B cell (primary cell): ENCODE measurements at regions of chr14 and their contacts with region 1.

Region 1: GRCh38 chr14:77076113-77076631 is 21.9 kb upstream of the CIPC start:
- DNase-seq: no peak
- ATAC-seq: no peak
- H3K4me3 ChIP-seq: no peak overlapping the region
- H3K4me3 Mint-ChIP-seq: no peak overlapping the region
- H3K27ac ChIP-seq: no peak overlapping the region
- H3K27ac Mint-ChIP-seq: no peak overlapping the region
- H3K4me1 ChIP-seq: peaks cover 0 to 10% of the 10 kb centered on the region in 2 donors
- H3K4me1 Mint-ChIP-seq: peaks cover 6% of the 10 kb centered on the region
- H3K27me3 ChIP-seq: peaks cover 0 to 2% (median 0%) of the 10 kb centered on the region in 4 experiments
- H3K27me3 Mint-ChIP-seq: no peaks in the 10 kb centered on the region
- CTCF ChIP-seq: no peak

Region 2: DNA sequence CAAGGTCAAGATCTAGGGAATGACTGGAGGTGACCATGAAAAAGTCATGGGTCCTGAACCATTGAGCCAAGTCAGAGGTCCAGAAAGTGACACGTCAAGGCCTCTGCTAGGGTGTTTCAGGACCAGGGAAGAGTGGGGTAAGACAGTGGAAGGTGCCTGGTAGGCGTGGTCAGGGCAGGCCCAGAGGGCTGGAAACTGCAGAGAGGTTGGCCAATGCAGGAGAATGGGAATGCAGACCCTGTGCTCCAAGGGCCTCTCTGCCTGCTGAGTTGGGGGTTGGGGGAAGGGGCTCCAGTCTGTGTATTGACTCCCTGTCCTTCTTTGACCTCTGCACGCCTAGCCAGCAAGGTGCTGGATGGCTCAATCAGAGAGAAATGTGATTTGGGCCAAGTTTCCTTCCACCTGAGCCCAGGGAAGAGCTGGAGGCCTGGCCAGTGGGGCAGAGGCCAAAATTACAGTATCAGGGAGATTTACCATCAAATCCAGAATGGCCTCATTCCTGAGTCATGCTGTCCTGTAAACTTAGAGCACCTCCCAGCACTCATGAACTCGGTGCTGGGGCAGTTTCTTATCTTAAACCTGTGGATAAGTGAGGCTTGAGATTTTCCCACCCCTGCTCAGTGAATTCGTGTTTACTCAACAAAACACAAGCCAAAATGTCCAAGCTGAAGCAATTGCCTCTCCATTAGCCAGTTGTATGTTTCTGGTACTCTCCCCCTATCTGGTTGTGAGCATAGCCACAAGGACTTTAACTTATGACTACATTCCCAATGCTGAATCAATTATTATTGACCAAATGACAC is 72.0 kb before region 1 on chr14:
- CTCF ChIA-PET with region 1: no interaction called
- POLR2A ChIA-PET with region 1: no interaction called
- intact Hi-C with region 1: no loop called
- DNase-seq: no peak
- ATAC-seq: no peak
- H3K4me3 ChIP-seq: no peak overlapping the region
- H3K4me3 Mint-ChIP-seq: no peak overlapping the region
- H3K27ac ChIP-seq: no peak overlapping the region
- H3K27ac Mint-ChIP-seq: no peak overlapping the region
- H3K4me1 ChIP-seq: peaks cover 14 to 24% of the 10 kb centered on the region in 2 donors
- H3K4me1 Mint-ChIP-seq: peaks cover 21% of the 10 kb centered on the region
- H3K27me3 ChIP-seq: peaks cover 0 to 5% (median 0%) of the 10 kb centered on the region in 4 experiments
- H3K27me3 Mint-ChIP-seq: no peaks in the 10 kb centered on the region
- CTCF ChIP-seq: no peak

Region 3: GRCh38 chr14:77086017-77086736 is 10.0 kb after region 1 on chr14:
- CTCF ChIA-PET with region 1: interaction called, 55 read pairs
- POLR2A ChIA-PET with region 1: interaction called, 12 read pairs
- intact Hi-C with region 1: no loop called
- DNase-seq: peak; percentile 56
- ATAC-seq: peak; percentile 78
- H3K4me3 ChIP-seq: no peak overlapping the region
- H3K4me3 Mint-ChIP-seq: no peak overlapping the region
- H3K27ac ChIP-seq: peak overlapping the region in 1 of 2 donors; percentile 33
- H3K27ac Mint-ChIP-seq: peak overlapping the region; percentile 32
- H3K4me1 ChIP-seq: peaks cover 0 to 7% of the 10 kb centered on the region in 2 donors
- H3K4me1 Mint-ChIP-seq: peaks cover 26% of the 10 kb centered on the region
- H3K27me3 ChIP-seq: no peaks in the 10 kb centered on the region
- H3K27me3 Mint-ChIP-seq: peaks cover 5% of the 10 kb centered on the region
- CTCF ChIP-seq: no peak

Region 4: DNA sequence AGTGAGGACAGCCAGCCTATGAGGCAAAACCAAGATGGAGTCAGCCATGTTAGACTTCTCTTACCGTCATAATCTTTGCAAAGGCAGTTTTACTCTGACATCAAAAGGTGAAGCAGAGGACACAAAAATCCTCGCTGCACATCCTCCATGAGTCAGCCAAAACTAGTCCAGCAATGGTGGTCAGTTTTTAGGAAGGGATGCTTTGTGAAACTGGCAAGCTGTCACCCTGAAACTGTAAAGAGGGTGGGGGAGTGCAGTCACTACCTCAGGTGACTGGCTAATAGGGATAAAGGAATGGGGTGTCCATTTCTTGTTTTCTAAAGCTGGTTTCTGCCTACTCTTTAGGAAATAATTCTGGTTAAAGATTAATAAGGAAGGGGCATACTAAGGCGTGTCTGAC is 16.5 kb after region 1 on chr14:
- CTCF ChIA-PET with region 1: interaction called, 71 read pairs
- POLR2A ChIA-PET with region 1: interaction called, 3 read pairs
- intact Hi-C with region 1: no loop called
- DNase-seq: no peak
- ATAC-seq: no peak
- H3K4me3 ChIP-seq: no peak overlapping the region
- H3K4me3 Mint-ChIP-seq: no peak overlapping the region
- H3K27ac ChIP-seq: no peak overlapping the region
- H3K27ac Mint-ChIP-seq: no peak overlapping the region
- H3K4me1 ChIP-seq: peaks cover 11 to 12% of the 10 kb centered on the region in 2 donors
- H3K4me1 Mint-ChIP-seq: peaks cover 20% of the 10 kb centered on the region
- H3K27me3 ChIP-seq: no peaks in the 10 kb centered on the region
- H3K27me3 Mint-ChIP-seq: peaks cover 5% of the 10 kb centered on the region
- CTCF ChIP-seq: no peak

Region 5: GRCh38 chr14:77133720-77134338 is 57.7 kb after region 1 on chr14:
- CTCF ChIA-PET with region 1: interaction called, 126 read pairs
- POLR2A ChIA-PET with region 1: no interaction called
- intact Hi-C with region 1: no loop called
- DNase-seq: peak; percentile 82
- ATAC-seq: peak; percentile 93
- H3K4me3 ChIP-seq: no peak overlapping the region
- H3K4me3 Mint-ChIP-seq: no peak overlapping the region
- H3K27ac ChIP-seq: no peak overlapping the region
- H3K27ac Mint-ChIP-seq: no peak overlapping the region
- H3K4me1 ChIP-seq: peaks cover 7 to 9% of the 10 kb centered on the region in 2 donors
- H3K4me1 Mint-ChIP-seq: peaks cover 5% of the 10 kb centered on the region
- H3K27me3 ChIP-seq: peaks cover 0 to 86% (median 56%) of the 10 kb centered on the region in 4 experiments
- H3K27me3 Mint-ChIP-seq: peaks cover 85% of the 10 kb centered on the region
- CTCF ChIP-seq: no peak